ENCODE measurements at regions of chr9 and their contacts with region 1.

Region 1: GRCh38 chr9:82091610-82092009 is 103.0 kb downstream of the SPATA31D1 start:
- DNase-seq: no peak
- ATAC-seq: peak; percentile 83
- H3K4me3 Mint-ChIP-seq: peak overlapping the region; percentile 59
- H3K27ac Mint-ChIP-seq: peak overlapping the region; percentile 85
- H3K4me1 Mint-ChIP-seq: peaks cover 55% of the 10 kb centered on the region
- H3K27me3 Mint-ChIP-seq: no peaks in the 10 kb centered on the region
- CTCF ChIP-seq: no peak

Region 2: GRCh38 chr9:81979196-81979595 is 112.4 kb before region 1 on chr9:
- CTCF ChIA-PET with region 1: no interaction called
- POLR2A ChIA-PET with region 1: no interaction called
- intact Hi-C with region 1: loop called (anchors 1 kb)
- DNase-seq: no peak
- ATAC-seq: peak; percentile 31
- H3K4me3 Mint-ChIP-seq: no peak overlapping the region
- H3K27ac Mint-ChIP-seq: no peak overlapping the region
- H3K4me1 Mint-ChIP-seq: peaks cover 22% of the 10 kb centered on the region
- H3K27me3 Mint-ChIP-seq: peaks cover 2% of the 10 kb centered on the region
- CTCF ChIP-seq: no peak

Region 3: GRCh38 chr9:82080265-82080664 is 11.3 kb before region 1 on chr9:
- CTCF ChIA-PET with region 1: interaction called, 4 read pairs
- POLR2A ChIA-PET with region 1: interaction called, 9 read pairs
- intact Hi-C with region 1: loop called (anchors 1 kb)
- DNase-seq: no peak
- ATAC-seq: peak; percentile 85
- H3K4me3 Mint-ChIP-seq: no peak overlapping the region
- H3K27ac Mint-ChIP-seq: peak overlapping the region; percentile 46
- H3K4me1 Mint-ChIP-seq: peaks cover 11% of the 10 kb centered on the region
- H3K27me3 Mint-ChIP-seq: no peaks in the 10 kb centered on the region
- CTCF ChIP-seq: no peak

Region 4: GRCh38 chr9:82128011-82128696 is 36.5 kb after region 1 on chr9:
- CTCF ChIA-PET with region 1: no interaction called
- POLR2A ChIA-PET with region 1: interaction called, 4 read pairs
- intact Hi-C with region 1: loop called (anchors 1 kb)
- DNase-seq: no peak
- ATAC-seq: peak; percentile 90
- H3K4me3 Mint-ChIP-seq: peak overlapping the region; percentile 60
- H3K27ac Mint-ChIP-seq: peak overlapping the region; percentile 84
- H3K4me1 Mint-ChIP-seq: peaks cover 72% of the 10 kb centered on the region
- H3K27me3 Mint-ChIP-seq: no peaks in the 10 kb centered on the region
- CTCF ChIP-seq: no peak

Region 5: GRCh38 chr9:82184524-82184923 is 92.9 kb after region 1 on chr9:
- CTCF ChIA-PET with region 1: no interaction called
- POLR2A ChIA-PET with region 1: no interaction called
- intact Hi-C with region 1: loop called (anchors 5 kb)
- DNase-seq: no peak
- ATAC-seq: peak; percentile 79
- H3K4me3 Mint-ChIP-seq: peak overlapping the region; percentile 3
- H3K27ac Mint-ChIP-seq: peak overlapping the region; percentile 74
- H3K4me1 Mint-ChIP-seq: peaks cover 37% of the 10 kb centered on the region
- H3K27me3 Mint-ChIP-seq: no peaks in the 10 kb centered on the region
- CTCF ChIP-seq: no peak